HepG2 (cell line): ENCODE measurements at regions of chr14 and their contacts with region 1.

Region 1: GRCh38 chr14:52552063-52552988 is at the starts of genes GPR137C and TXNDC16:
- DNase-seq: peak; percentile 99
- ATAC-seq: peak; percentile 94
- H3K4me3 ChIP-seq: peak within 1 kb of the TSS; percentile 76 to 92 (median 88)
- H3K27ac ChIP-seq: peak within 1 kb of the TSS; percentile 74
- H3K4me1 ChIP-seq: peaks cover 38% of the 10 kb centered on the region
- H3K27me3 ChIP-seq: no peaks in the 10 kb centered on the region; a peak in 1 of 5 replicates
- CTCF ChIP-seq: no peak
- EP300 ChIP-seq: no peak
- POLR2A ChIP-seq: peak; percentile 94
- RAD21 ChIP-seq: 0 out of 2 replicates have a peak, but pooled peaks have one; percentile 35
- total RNA-seq, gene GPR137C: 0.51 TPM in 2 replicates
- total RNA-seq, gene TXNDC16: 4.3 and 6.2 TPM in 2 replicates

Region 2: DNA sequence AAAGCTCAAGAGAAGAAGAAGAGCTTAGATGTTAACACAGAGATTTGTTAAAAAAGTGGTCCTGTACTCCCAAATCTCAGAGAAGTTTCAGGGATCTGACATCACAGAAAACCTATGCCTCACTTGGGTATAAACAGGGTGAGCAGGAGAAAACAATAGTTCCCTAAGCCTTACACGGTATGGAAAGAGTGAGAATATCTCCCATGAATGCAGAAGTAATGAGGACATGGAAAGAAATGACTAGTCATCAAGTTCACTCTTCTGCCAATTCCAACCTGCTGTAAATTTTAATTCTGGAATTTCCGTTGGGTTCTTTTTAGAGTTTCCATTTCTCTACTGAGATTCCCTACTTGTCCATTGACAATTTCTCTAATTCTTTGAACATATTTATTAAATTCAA is 244.4 kb before region 1 on chr14:
- CTCF ChIA-PET with region 1: no interaction called
- POLR2A ChIA-PET with region 1: no interaction called
- in situ Hi-C with region 1: no loop called
- intact Hi-C with region 1: loop called (anchors 5 kb)
- DNase-seq: no peak
- ATAC-seq: peak; percentile 36
- H3K4me3 ChIP-seq: no peak overlapping the region
- H3K27ac ChIP-seq: peak overlapping the region; percentile 17
- H3K4me1 ChIP-seq: peaks cover 22% of the 10 kb centered on the region
- H3K27me3 ChIP-seq: no peaks in the 10 kb centered on the region
- CTCF ChIP-seq: no peak
- EP300 ChIP-seq: no peak
- POLR2A ChIP-seq: no peak
- RAD21 ChIP-seq: no peak

Region 3: GRCh38 chr14:52455291-52456088 is 96.8 kb before region 1 on chr14:
- CTCF ChIA-PET with region 1: no interaction called
- POLR2A ChIA-PET with region 1: interaction called, 6 read pairs
- in situ Hi-C with region 1: no loop called
- intact Hi-C with region 1: loop called (anchors 5 kb)
- DNase-seq: no peak
- ATAC-seq: no peak
- H3K4me3 ChIP-seq: no peak overlapping the region
- H3K27ac ChIP-seq: no peak overlapping the region
- H3K4me1 ChIP-seq: peaks cover 19% of the 10 kb centered on the region
- H3K27me3 ChIP-seq: no peaks in the 10 kb centered on the region
- CTCF ChIP-seq: no peak
- EP300 ChIP-seq: no peak
- POLR2A ChIP-seq: no peak
- RAD21 ChIP-seq: no peak

Region 4: DNA sequence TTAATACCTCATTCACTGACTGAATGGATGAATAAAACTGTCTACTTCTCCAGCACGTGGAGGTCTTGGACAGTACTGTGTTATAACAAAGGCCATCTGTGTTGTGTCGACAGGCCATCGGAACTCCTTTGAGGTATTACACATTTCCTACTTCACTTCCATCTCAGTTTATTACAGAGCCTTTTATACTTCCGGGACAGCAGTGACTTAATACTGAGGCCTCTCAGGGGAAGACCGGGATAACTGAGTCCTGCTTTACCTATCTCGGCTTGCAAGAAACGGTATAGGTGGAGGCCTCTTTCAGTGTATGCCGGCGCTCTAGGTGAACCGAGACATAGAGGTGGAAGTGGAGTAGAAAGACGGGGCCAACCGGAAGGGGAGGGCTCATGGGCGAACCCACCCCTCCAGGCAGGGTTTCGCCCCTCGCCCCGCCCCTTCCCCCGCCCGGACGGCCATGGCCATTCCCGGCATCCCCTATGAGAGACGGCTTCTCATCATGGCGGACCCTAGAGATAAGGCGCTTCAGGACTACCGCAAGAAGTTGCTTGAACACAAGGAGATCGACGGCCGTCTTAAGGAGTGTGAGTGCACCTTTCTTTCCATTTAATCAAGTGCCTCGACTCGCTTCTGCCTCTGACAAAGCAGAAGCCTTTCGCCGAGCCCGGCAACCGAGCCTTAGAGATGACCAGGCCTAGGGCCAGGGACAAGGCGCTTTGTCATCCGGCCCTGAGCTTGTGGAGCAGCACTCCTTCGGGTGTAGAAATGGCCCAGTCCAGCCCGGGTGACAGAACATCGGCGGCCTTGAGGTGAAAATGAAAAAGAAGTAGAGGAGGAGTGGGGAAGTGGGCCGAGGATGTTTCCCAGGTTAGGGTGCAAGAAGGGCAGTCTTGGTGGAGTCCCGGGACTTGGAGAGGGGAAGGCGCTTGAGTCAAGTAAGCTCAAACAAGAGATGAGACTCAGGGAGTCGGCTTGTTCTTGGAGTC is 154.7 kb after region 1 on chr14 and contains the start of gene PSMC6:
- CTCF ChIA-PET with region 1: no interaction called
- POLR2A ChIA-PET with region 1: no interaction called
- in situ Hi-C with region 1: no loop called
- intact Hi-C with region 1: loop called (anchors 5 kb)
- DNase-seq: peak; percentile 89
- ATAC-seq: peak; percentile 98
- H3K4me3 ChIP-seq: peak within 1 kb of the TSS; percentile 85 to 94 (median 87)
- H3K27ac ChIP-seq: peak within 1 kb of the TSS; percentile 99
- H3K4me1 ChIP-seq: peaks cover 44% of the 10 kb centered on the region
- H3K27me3 ChIP-seq: no peaks in the 10 kb centered on the region; a peak in 1 of 5 replicates
- CTCF ChIP-seq: 0 out of 2 replicates have a peak, but pooled peaks have one; percentile 9
- EP300 ChIP-seq: no peak
- POLR2A ChIP-seq: peak; percentile 90 to 96
- RAD21 ChIP-seq: no peak
- total RNA-seq, gene PSMC6: 210 and 318 TPM in 2 replicates